Mammary epithelial cell (primary cell): ENCODE measurements at regions of chr15 and their contacts with region 1.

Region 1: GRCh38 chr15:68479406-68479805 is 47.4 kb upstream of the ITGA11 start:
- DNase-seq: no peak
- H3K4me3 ChIP-seq: no peak overlapping the region
- H3K27ac ChIP-seq: no peak overlapping the region
- H3K4me1 ChIP-seq: no peaks in the 10 kb centered on the region
- H3K27me3 ChIP-seq: peaks cover 3% of the 10 kb centered on the region
- CTCF ChIP-seq: no peak

Region 2: DNA sequence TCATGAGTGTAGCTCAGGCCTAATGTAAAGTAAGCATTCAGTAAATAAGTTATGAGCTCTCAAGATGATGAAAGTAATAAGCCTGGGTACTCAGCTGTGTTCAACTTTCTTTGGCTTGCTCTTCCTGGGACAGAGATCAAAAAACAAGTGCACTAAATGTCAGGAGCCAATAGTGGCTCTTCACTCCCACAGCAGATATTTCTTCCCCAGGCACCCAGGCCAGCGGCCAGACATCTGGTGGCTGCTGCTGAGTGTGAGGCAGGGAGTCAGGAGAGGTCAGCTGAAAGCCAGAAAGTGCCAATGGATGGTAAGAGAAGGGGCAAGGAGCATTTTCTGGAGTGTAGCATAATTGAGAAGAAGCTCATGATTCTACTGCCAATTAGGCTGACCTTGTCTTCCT is 29.2 kb before region 1 on chr15:
- CTCF ChIA-PET with region 1: no interaction called
- dilution Hi-C with region 1: no loop called
- in situ Hi-C with region 1: no loop called
- intact Hi-C with region 1: no loop called
- DNase-seq: no peak
- H3K4me3 ChIP-seq: no peak overlapping the region
- H3K27ac ChIP-seq: no peak overlapping the region
- H3K4me1 ChIP-seq: no peaks in the 10 kb centered on the region
- H3K27me3 ChIP-seq: peaks cover 12% of the 10 kb centered on the region
- CTCF ChIP-seq: no peak

Region 3: DNA sequence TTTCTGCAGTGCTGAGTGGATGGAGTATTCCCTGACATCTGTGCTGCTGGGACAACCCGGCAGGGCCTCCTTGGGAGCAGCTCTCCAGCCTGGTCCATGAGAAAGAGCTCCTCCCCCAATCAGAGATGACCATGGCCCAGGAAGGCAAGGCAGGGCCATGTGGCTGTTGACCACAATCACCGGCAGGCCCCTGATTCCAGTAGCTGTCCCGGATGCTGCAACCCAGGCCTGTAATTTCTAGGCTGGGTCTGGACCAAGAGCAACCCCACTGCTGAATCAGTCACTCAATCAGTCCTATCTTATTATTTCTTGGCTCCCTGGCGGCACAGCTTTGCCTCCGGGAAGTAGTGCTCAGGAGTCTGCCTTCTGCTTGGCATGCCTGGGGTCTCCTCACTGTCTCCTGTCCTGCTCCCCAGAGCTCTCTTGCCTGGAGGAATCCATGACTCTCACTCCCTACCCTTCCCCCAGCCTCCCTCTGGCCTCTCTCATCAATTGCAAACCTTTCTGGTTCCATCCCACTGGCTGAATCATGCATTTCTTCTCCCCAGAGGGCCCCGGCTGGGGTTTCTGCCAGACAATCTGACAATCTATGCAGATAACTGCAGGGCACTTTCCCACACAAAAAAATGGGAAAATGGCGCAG is 14.8 kb before region 1 on chr15:
- CTCF ChIA-PET with region 1: no interaction called
- dilution Hi-C with region 1: no loop called
- in situ Hi-C with region 1: no loop called
- intact Hi-C with region 1: loop called (anchors 2 kb)
- DNase-seq: no peak
- H3K4me3 ChIP-seq: no peak overlapping the region
- H3K27ac ChIP-seq: no peak overlapping the region
- H3K4me1 ChIP-seq: no peaks in the 10 kb centered on the region
- H3K27me3 ChIP-seq: no peaks in the 10 kb centered on the region
- CTCF ChIP-seq: no peak

Region 4: GRCh38 chr15:68550481-68551295 is 71.3 kb after region 1 on chr15:
- CTCF ChIA-PET with region 1: no interaction called
- dilution Hi-C with region 1: no loop called
- in situ Hi-C with region 1: no loop called
- intact Hi-C with region 1: no loop called
- DNase-seq: peak; percentile 37
- H3K4me3 ChIP-seq: no peak overlapping the region
- H3K27ac ChIP-seq: no peak overlapping the region
- H3K4me1 ChIP-seq: no peaks in the 10 kb centered on the region
- H3K27me3 ChIP-seq: no peaks in the 10 kb centered on the region
- CTCF ChIP-seq: peak; percentile 82 to 89